HEK293T (cell line): ENCODE measurements at regions of chr1 and their contacts with region 1.

Region 1: DNA sequence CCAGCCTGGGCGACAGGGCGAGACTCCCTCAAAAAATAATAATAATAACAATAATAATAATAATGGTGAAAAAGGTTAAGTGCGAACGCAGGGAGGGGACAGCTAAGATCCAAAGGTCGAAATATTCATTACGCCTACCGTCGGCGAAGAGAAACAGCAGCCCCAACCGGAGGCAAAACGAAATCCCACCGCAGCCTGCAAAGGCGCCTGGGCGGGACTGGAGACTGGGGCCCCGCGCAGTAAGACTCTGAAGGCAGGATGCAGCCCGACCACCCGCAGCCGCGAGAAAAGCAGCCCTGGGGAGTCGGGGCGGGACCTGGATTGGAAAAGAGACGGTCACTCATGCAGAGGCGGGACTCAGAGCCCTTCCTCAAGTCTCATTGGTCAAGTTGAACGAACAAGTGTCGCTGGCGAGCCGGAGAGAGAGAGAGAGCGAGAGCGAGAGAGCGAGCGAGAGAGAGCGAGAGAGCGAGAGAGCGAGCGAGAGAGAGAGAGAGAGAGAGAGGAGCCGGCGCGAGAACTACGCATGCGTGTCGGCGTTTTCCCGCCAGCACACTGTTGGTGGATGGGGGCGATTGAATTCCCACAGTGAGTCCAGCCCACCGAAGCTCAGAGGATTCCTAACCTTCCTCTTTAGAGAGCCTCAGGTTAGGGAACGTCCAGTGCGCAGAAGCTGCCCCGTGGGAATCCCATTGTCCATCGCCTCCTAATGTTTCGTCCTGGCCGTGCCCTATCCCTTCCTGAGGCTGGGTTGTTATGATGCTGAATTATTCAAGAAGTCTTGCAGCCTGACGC is 10.7 kb downstream of the ENTREP3 start:
- DNase-seq: peak; percentile 96

Region 2: DNA sequence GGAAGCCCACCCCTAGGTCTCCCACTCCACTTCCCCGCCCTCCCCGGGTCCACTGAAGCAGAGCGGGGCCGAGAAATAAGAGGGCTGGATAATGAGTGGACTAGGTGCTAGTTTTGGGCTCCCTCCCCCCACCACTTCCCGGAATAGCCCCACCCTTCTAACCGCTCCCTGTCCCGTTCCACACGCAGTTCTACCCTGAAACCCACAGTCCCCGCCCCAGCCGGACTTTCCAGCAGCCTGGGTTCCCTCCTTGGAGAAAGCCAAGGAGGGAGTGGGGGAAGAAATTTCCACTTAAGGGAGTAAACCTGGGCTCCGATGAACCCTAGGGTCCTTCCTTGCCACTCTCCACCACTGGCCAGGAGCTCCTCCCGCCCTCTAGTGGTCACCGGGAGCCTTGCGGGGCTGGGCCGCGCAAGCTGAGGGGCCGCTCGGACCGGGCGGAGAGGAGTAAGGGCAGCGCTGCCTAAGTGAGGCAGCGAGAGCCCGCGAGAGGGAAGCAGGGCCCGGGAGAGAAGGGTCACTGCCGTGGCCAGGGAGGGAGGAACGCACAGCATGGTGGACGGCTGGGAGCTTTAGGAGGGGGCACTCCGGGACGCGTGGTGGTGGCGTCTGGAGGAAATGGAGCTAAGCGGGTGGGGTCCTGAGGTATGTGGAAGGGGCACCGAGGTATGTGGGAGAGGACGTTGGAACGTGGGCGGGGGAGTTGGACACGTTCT is 51.1 kb before region 1 on chr1:
- CTCF ChIA-PET with region 1: interaction called, 6 read pairs
- POLR2A ChIA-PET with region 1: interaction called, 15 read pairs
- DNase-seq: peak; percentile 93

Region 3: DNA sequence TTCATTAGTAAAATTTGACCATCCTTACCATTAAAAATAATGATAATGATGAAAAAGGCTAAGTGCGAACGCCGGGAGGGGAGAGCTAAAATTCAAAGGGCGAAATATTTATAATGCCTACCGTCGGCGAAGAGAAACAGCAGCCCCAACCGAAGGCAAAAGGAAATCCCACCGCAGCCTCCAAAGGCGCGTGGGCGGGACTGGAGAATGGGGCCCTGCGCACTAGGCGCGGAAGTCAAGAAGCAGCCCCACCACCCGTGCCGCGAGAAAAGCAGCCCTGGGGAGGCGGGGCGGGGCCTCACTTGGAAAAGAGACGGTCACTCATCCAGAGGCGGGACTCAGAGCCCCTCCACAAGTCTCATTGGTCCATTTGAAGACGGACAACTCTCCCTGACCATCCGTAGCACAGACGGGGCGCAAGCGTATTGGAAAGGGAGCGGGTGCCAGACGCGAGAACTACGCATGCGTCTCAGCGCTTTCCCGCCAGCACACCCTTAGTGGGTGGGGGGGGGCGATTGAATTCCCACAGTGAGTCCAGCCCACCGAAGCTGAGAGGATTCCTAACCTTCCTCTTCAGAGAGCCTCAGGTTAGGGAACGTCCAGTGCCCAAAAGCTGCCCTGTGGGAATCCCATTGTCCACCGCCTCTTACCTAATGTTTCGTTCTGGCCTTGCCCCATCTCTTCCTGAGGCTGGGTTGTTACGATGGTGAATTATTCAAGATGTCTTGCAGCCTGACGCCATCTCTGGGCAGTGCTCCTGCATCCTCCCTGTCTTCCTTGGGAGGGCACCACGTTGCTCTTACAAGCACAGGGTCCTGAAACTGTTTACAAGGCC is 17.1 kb before region 1 on chr1:
- CTCF ChIA-PET with region 1: interaction called, 7 read pairs
- POLR2A ChIA-PET with region 1: interaction called, 31 read pairs
- DNase-seq: peak; percentile 100

Region 4: DNA sequence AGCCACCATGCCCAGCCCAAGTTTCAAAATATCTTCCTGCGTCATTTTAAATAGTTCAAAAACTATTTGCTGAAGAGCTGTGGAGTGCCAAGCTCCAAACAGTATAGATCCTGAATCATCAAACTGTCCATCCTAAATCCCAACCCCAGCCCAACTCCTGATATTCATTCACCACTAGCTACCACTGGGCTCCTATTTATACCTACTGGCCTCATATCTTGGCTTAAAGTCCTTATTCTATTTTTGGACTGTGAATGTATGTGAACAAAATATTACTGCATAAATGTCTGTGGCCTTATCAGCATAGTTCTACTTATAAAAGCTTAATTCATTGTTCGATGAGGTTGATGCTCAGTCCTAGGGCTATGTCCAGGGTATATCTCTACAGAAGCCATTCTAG is 22.8 kb after region 1 on chr1:
- CTCF ChIA-PET with region 1: no interaction called
- POLR2A ChIA-PET with region 1: interaction called, 32 read pairs
- DNase-seq: no peak

Region 5: GRCh38 chr1:155323798-155324610 is 79.4 kb after region 1 on chr1:
- CTCF ChIA-PET with region 1: interaction called, 62 read pairs
- POLR2A ChIA-PET with region 1: interaction called, 43 read pairs
- DNase-seq: peak; percentile 95